Uterus (tissue), 4 donors: ENCODE measurements at regions of chr3 and their contacts with region 1.

Region 1: GRCh38 chr3:141192345-141192744 is 39.3 kb upstream of the PXYLP1 start:
- DNase-seq: peak; percentile 97
- H3K4me3 ChIP-seq: no peak overlapping the region
- H3K27ac ChIP-seq: no peak overlapping the region
- H3K4me1 ChIP-seq: no peaks in the 10 kb centered on the region
- H3K27me3 ChIP-seq: no peaks in the 10 kb centered on the region
- CTCF ChIP-seq: peak; percentile 96 to 99 (median 99)
- POLR2A ChIP-seq: no peak

Region 2: GRCh38 chr3:140903196-140903595 is 289.1 kb before region 1 on chr3:
- intact Hi-C with region 1: loop called (anchors 5 kb)
- DNase-seq: no peak
- H3K4me3 ChIP-seq: no peak overlapping the region
- H3K27ac ChIP-seq: no peak overlapping the region
- H3K4me1 ChIP-seq: no peaks in the 10 kb centered on the region
- H3K27me3 ChIP-seq: no peaks in the 10 kb centered on the region
- CTCF ChIP-seq: no peak
- POLR2A ChIP-seq: no peak

Region 3: DNA sequence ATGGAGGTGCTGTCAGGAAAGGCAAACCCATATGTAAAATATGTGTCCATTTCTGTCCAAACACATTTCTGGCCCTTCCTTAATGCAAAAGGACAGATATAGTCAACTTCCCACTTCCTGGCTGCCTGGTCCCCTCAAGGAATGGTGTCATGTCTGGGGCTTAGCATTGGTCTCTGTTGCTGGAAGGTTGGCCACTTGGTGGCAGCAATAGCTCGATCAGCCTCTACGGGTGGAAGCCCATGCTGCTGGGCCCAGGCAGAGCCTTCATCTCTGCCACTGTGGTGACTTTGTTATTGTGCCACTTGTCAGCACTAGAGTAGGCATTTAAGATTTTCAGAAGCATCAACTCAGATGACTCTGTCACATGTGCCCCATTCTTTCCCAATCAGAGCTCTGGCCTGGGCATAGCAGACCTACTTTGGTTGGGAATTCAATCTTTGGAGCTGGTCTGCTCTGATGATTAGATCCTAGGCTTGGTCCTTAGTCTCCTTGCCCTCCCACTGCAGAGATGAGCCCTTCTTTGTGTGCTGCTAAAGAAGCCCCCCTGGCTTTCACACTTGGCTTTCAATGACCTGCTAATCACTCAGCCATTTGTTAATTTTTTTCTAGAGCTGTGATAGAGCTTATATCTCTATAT is 192.2 kb before region 1 on chr3:
- intact Hi-C with region 1: loop called (anchors 10 kb)
- DNase-seq: peak; percentile 46 to 55
- H3K4me3 ChIP-seq: no peak overlapping the region
- H3K27ac ChIP-seq: no peak overlapping the region
- H3K4me1 ChIP-seq: no peaks in the 10 kb centered on the region
- H3K27me3 ChIP-seq: no peaks in the 10 kb centered on the region
- CTCF ChIP-seq: peak; percentile 47 to 71 (median 56)
- POLR2A ChIP-seq: no peak